ENCODE measurements at regions of chr11 and their contacts with region 1.

Region 1: DNA sequence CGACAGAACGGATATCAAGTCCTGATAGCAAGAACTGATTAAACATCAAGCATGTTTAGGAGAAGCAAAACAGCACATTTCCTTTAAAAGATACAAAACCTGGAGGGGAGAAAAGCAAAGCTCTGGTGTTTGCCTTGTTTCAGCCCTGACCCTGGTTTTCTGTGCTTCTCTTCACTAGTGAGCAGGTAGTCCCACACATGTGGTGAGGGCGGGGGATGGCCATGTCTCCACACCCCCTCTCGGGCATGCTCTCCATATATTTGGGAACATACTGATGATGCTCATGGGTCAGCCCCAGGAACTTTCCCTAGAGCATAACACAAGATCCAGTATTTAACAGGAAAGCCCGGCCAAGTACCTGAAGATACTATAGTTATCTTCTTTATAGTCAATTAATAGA is 10.1 kb downstream of the C11orf16 start:
- DNase-seq: no peak
- H3K4me3 ChIP-seq: no peak overlapping the region
- H3K27ac ChIP-seq: no peak overlapping the region
- H3K4me1 ChIP-seq: no peaks in the 10 kb centered on the region
- H3K27me3 ChIP-seq: no peaks in the 10 kb centered on the region
- CTCF ChIP-seq: no peak
- POLR2A ChIP-seq: no peak

Region 2: DNA sequence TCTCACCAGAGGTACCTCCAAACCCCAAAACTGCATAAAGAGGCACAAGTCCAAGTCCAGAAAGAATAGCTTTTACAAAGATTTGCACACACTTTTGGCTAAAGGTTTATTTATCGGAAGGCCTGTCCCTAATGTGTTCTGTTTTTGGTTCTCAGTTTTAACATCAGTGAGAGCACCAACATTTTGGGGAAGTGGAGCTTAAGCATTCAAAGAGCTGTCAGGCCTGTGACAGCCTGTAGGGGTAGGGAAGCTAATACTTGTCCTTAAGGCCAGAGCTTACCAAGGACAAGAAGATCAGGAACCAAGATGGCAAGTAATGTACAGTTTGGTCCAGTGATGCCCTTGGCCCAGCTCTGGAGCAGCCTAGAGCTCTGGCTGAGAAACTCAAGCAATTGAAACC is 207.6 kb after region 1 on chr11:
- intact Hi-C with region 1: loop called in 1 of 2 experiments (anchors 5 kb)
- DNase-seq: no peak
- H3K4me3 ChIP-seq: no peak overlapping the region
- H3K27ac ChIP-seq: no peak overlapping the region
- H3K4me1 ChIP-seq: no peaks in the 10 kb centered on the region
- H3K27me3 ChIP-seq: no peaks in the 10 kb centered on the region
- CTCF ChIP-seq: no peak
- POLR2A ChIP-seq: no peak

Measured in adrenal gland (tissue), 19 donors.